Activated B cell treated with CpG ODN at 0.5 μM for 24 hours (primary cell): ENCODE measurements at regions of chrX and their contacts with region 1.

Region 1: DNA sequence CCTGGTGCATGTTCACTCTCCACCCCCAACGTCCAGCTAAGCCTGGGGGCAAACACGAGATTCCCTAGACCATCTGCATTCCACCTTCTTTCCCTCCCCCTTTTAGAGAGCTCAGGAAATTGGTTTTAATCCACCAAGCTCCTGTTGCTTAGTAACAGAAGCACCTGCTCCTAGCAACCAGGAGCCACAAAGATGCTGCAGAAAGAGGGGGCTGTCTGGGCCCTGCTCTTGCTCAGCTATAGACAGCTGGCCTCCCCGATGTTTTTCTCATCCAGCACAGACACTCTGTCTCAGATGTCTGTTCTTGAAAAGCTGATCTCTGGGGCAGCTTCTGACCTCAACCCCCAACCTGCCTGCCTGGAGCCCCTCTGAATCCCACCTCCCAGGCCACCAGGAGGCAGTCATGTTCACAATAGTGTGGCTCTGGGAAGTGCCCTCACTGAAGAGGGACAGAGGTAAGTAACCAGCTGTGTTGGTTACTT is 71.5 kb downstream of the SLC16A2 start:
- DNase-seq: no peak
- ATAC-seq: peak; percentile 74
- H3K4me3 Mint-ChIP-seq: no peak overlapping the region
- H3K27ac Mint-ChIP-seq: no peak overlapping the region
- H3K4me1 Mint-ChIP-seq: no peaks in the 10 kb centered on the region
- H3K27me3 Mint-ChIP-seq: no peaks in the 10 kb centered on the region
- CTCF ChIP-seq: no peak

Region 2: DNA sequence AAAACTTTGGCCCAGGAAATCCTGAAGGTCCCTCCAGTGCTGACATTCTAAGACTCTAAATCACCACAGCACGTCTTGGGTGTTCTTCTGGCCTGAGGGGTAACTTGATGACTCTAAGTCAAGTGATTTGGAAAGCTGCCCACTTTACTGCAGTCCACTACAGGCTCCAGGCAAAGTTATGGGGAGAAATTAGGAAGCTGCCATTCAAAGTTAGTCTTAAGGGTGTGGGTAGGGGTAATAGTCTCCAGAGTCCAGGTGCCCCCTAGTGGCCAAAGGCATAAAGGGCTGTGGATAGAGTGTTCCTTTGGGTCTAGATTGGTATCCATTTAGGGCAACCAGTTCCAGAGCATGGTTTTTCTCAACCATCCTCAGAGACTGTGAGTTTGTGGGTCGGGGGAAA is 110.1 kb before region 1 on chrX:
- CTCF ChIA-PET with region 1: no interaction called
- POLR2A ChIA-PET with region 1: no interaction called
- intact Hi-C with region 1: loop called (anchors 1 kb)
- DNase-seq: peak; percentile 13
- ATAC-seq: no peak
- H3K4me3 Mint-ChIP-seq: no peak overlapping the region
- H3K27ac Mint-ChIP-seq: no peak overlapping the region
- H3K4me1 Mint-ChIP-seq: no peaks in the 10 kb centered on the region
- H3K27me3 Mint-ChIP-seq: peaks cover 3% of the 10 kb centered on the region
- CTCF ChIP-seq: no peak

Region 3: GRCh38 chrX:74431797-74432196 is 61.0 kb before region 1 on chrX:
- CTCF ChIA-PET with region 1: no interaction called
- POLR2A ChIA-PET with region 1: no interaction called
- intact Hi-C with region 1: no loop called
- DNase-seq: no peak
- ATAC-seq: no peak
- H3K4me3 Mint-ChIP-seq: no peak overlapping the region
- H3K27ac Mint-ChIP-seq: no peak overlapping the region
- H3K4me1 Mint-ChIP-seq: no peaks in the 10 kb centered on the region
- H3K27me3 Mint-ChIP-seq: peaks cover 2% of the 10 kb centered on the region
- CTCF ChIP-seq: no peak

Region 4: GRCh38 chrX:74585766-74586165 is 93.0 kb after region 1 on chrX:
- CTCF ChIA-PET with region 1: no interaction called
- POLR2A ChIA-PET with region 1: no interaction called
- intact Hi-C with region 1: no loop called
- DNase-seq: no peak
- ATAC-seq: no peak
- H3K4me3 Mint-ChIP-seq: no peak overlapping the region
- H3K27ac Mint-ChIP-seq: no peak overlapping the region
- H3K4me1 Mint-ChIP-seq: no peaks in the 10 kb centered on the region
- H3K27me3 Mint-ChIP-seq: no peaks in the 10 kb centered on the region
- CTCF ChIP-seq: no peak

Region 5: DNA sequence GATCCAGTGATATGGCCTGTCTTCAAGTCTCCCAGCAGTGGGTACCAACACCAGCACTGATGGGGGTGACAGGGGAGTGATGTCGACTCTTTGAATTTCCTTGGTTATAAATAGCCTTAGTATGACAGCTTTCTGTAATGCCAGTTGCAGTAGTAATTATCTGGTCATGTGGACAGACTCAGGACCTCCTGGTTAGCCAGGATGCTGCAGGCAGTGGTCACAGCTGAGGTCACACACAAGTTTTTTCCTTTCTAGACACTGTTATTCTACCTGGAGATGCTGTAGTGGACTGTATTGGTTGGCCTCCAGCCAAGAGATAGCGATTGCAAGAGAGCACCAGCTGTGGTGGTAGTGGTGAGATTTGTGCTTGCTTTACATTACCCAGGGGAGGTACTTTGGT is 844.8 kb after region 1 on chrX:
- CTCF ChIA-PET with region 1: no interaction called
- POLR2A ChIA-PET with region 1: no interaction called
- intact Hi-C with region 1: no loop called
- DNase-seq: no peak
- ATAC-seq: no peak
- H3K4me3 Mint-ChIP-seq: no peak overlapping the region
- H3K27ac Mint-ChIP-seq: no peak overlapping the region
- H3K4me1 Mint-ChIP-seq: no peaks in the 10 kb centered on the region
- H3K27me3 Mint-ChIP-seq: no peaks in the 10 kb centered on the region
- CTCF ChIP-seq: no peak